BJ (cell line): ENCODE measurements at regions of chr5 and their contacts with region 1.

Region 1: DNA sequence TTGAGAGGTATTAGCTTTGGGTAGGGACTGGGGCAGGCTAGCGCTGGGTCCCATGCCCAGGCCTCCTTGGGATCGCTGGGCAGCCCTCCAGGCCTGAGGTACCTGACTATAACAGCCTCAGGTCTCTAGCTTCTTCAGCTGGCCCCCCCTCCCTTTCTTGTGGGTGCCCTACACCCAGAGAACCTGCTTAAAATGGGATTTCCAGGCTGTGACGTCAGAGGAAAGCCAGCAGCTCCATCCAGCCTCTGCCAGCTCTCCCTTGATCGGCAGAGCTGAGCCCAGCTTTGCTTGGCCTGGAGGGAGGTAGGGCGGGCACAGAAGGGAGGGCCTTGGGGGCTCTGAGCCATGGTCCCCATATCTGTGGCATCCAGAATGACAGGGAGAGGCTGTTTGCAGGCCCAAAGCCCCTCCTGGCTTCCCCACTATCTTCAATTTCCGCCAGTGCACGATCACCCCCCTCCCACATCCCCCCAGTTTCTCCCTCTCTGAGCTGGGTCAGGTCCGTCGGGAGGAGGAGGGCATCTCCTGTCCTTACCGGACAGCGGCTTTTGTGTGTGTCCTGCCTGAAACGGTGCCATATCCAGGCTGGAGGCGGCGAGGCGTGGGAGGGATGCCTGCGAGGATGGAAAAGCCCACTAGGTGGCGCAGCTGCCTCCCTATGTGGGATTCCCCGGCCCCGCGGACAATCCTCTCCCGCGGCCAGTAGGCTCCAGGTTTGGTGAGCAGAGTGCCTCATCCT is 10.8 kb downstream of the REEP2 start:
- DNase-seq: no peak
- H3K4me3 ChIP-seq: no peak overlapping the region
- H3K27me3 ChIP-seq: no peaks in the 10 kb centered on the region
- CTCF ChIP-seq: peak; percentile 94

Region 2: DNA sequence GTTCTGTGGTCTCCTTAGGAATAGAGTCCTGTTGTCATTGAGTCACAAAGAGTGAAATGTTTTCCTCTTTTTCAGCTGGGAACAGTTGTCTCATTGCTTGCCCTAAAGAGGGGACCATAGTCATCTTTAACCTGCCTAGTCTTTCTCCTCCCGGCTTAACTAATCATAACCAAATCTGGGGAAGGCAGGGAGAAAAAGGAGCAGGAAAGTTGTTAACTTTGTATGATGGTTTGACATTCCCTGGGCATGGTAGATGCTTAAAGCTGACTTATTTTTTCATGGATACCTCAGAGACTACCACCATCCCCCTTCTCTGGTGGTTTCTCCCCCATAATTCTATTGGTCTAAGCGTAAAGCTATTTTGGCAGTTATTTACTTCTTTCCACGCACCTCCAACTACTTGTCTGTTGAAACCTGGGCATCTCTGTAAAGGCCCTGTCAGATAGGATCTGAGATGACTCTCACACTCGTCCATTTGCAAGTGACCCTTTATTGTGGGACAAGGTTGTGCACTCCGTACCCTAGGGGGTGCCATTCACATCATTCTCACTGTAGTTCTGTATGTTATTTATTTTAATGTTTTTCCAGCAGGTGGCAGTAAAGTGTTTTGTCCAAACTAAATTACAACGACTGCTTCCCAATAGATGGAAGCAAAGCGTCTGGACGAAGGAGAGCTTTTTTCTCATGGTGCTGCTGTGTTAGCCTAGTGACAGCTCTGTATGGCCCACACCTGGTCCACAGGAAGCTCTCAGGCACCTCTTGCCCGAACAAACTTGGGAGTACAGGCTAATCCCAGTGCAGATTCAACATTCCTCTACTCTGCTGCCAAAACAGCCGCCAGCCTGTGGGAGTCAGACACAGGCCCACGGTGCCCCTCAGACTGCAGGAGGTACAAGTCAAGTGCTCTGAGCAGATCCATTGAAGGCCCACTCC is 413.8 kb before region 1 on chr5:
- CTCF ChIA-PET with region 1: no interaction called
- POLR2A ChIA-PET with region 1: no interaction called
- DNase-seq: peak; percentile 53
- H3K4me3 ChIP-seq: no peak overlapping the region
- H3K27me3 ChIP-seq: no peaks in the 10 kb centered on the region
- CTCF ChIP-seq: peak; percentile 88

Region 3: DNA sequence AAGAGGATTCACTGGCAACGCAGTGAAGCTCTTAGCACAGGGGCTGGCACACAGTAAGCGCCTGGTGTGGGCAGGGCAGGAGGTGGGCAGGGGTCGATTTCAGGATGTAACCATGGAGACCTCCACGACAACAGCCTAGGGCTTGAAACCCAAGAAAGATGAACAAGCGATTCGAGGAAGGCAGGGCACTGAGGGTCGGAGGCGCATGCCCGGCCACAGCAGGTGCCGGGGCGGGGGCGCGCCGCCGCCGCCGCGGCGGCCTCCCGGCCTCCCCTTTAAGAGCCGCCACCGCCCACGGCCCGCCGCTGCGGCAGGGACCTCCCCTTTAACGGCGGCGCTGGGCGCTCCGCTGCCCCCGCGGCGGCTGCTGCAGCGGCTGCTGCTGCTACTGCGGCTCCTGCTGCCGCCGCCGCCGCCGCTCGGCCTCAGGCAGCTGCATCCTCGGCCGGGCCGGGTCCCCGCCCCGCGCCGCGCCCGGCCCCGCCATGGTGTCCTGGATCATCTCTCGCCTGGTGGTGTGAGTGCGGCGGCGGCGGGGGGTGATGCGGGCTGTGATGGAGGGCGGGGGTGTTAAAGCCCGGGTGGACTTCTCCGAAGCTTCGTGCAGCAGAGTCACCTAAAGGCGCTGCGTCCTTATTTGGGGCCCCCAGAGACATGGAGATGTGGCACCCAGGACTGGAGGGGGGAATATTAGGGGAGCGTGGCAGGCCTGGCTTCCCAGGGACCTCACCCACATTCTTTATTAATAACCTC is 10.8 kb before region 1 on chr5 and contains the start of gene REEP2:
- CTCF ChIA-PET with region 1: interaction called, 16 read pairs
- POLR2A ChIA-PET with region 1: no interaction called
- DNase-seq: no peak
- H3K4me3 ChIP-seq: peak within 1 kb of the TSS; percentile 57
- H3K27me3 ChIP-seq: no peaks in the 10 kb centered on the region
- CTCF ChIP-seq: no peak
- polyA plus RNA-seq, gene REEP2: 12.0 and 14.0 TPM in 2 replicates

Region 4: GRCh38 chr5:138464008-138464387 is 14.3 kb after region 1 on chr5:
- CTCF ChIA-PET with region 1: interaction called, 101 read pairs
- POLR2A ChIA-PET with region 1: no interaction called
- DNase-seq: peak; percentile 71
- H3K4me3 ChIP-seq: peak overlapping the region; percentile 84
- H3K27me3 ChIP-seq: no peaks in the 10 kb centered on the region
- CTCF ChIP-seq: peak; percentile 79

Region 5: GRCh38 chr5:138482638-138483037 is 33.0 kb after region 1 on chr5:
- CTCF ChIA-PET with region 1: no interaction called
- POLR2A ChIA-PET with region 1: no interaction called
- DNase-seq: no peak
- H3K4me3 ChIP-seq: no peak overlapping the region
- H3K27me3 ChIP-seq: no peaks in the 10 kb centered on the region
- CTCF ChIP-seq: no peak

Region 6: GRCh38 chr5:138498376-138498775 is 48.7 kb after region 1 on chr5:
- CTCF ChIA-PET with region 1: interaction called, 123 read pairs
- POLR2A ChIA-PET with region 1: no interaction called
- DNase-seq: no peak
- H3K4me3 ChIP-seq: no peak overlapping the region
- H3K27me3 ChIP-seq: no peaks in the 10 kb centered on the region
- CTCF ChIP-seq: no peak

Region 7: DNA sequence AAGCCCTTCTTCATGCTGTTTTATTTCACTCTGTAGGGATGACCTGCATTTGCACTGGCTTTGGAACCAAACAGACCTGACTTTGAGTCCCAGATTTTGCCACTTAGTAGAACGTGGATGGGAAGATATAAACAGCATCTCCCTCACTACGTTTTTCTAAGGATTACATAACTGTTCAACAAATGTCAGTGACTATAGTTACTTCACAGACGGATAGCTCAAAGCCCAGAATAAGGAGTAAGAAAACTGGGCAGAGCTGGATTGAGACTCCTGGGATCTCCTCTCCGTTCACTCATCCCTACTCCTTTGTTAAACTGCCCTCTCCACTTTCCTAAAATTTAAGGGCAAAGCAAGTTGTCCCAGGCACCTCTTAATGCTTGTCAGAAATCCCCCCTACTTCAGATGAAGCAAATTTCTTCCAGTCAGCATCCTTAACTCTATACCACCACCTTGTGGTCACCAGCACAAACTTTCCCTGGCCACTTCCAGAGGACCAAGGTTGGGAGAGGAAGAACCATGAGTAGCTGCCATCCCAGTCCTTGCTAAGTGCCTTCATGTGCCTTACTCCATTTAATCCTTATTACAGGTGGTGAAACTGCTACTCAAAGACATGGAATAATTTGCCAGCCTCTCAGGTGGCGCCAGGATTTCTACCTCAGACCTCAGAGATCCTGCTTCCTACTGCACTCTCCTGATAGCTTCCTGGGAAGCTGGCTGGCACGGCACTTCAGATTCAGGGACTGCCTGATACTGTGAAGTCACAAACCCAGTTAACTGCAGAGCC is 54.0 kb after region 1 on chr5:
- CTCF ChIA-PET with region 1: interaction called, 123 read pairs
- POLR2A ChIA-PET with region 1: no interaction called
- DNase-seq: no peak
- H3K4me3 ChIP-seq: no peak overlapping the region
- H3K27me3 ChIP-seq: no peaks in the 10 kb centered on the region
- CTCF ChIP-seq: peak; percentile 79

Region 8: GRCh38 chr5:138542956-138543729 is 93.5 kb after region 1 on chr5 and contains the start of gene ETF1:
- CTCF ChIA-PET with region 1: interaction called, 35 read pairs
- POLR2A ChIA-PET with region 1: no interaction called
- DNase-seq: peak; percentile 98
- H3K4me3 ChIP-seq: peak within 1 kb of the TSS; percentile 87
- H3K27me3 ChIP-seq: no peaks in the 10 kb centered on the region
- CTCF ChIP-seq: no peak
- polyA plus RNA-seq, gene ETF1: 52.4 and 86.4 TPM in 2 replicates